GM10248 (cell line): ENCODE measurements at regions of chr11 and their contacts with region 1.

Region 1: DNA sequence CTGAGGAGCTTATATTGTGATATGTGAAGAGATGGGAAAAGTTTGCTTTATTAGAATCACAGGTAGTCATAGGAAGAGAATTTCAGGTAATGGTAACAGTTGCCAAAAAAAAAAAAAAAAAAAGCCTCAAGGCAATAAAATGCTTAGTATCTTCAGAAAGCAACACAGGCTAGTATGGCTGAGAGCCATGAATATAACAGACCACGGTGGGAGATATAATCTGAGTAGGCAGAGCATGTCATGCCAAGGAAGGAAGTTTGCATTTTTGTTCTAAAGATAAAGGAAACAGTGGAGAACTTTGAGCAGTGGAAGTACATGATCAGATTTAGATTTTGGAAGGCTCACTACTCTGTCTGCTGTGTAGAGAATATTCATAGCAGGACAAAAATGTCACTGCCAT is 211.4 kb downstream of the ETS1 start:
- DNase-seq: no peak
- CTCF ChIP-seq: no peak

Region 2: GRCh38 chr11:128359515-128359914 is 16.4 kb before region 1 on chr11:
- CTCF ChIA-PET with region 1: interaction called, 10 read pairs
- POLR2A ChIA-PET with region 1: no interaction called
- DNase-seq: no peak
- CTCF ChIP-seq: no peak

Region 3: DNA sequence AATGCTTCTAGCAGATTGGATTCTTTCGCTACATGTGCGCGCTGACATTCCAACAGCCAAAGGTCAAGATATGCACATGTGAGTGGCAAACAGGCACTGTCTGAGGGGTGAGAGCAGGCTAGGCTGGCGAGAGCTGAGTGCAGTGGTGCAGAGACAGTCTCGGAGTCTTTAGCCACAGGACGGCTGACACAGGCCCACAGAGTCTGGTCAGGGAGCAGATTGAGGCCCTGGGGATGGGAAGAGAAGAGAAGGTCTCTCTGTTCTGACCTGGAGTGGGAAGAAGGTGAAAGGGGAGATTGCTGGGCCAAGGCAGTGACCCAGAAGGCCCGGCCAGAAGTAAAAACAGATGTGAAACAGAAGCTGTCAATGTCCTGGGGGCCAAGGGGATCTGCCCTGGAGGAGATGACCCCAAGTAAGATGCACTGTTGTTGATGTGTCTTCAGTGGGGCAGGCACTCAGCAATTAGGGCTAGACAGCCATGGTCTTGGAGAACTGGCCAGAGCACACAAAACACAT is 13.6 kb after region 1 on chr11:
- CTCF ChIA-PET with region 1: no interaction called
- POLR2A ChIA-PET with region 1: no interaction called
- DNase-seq: no peak
- CTCF ChIP-seq: no peak